ENCODE measurements at regions of chr13 and their contacts with region 1.

Region 1: DNA sequence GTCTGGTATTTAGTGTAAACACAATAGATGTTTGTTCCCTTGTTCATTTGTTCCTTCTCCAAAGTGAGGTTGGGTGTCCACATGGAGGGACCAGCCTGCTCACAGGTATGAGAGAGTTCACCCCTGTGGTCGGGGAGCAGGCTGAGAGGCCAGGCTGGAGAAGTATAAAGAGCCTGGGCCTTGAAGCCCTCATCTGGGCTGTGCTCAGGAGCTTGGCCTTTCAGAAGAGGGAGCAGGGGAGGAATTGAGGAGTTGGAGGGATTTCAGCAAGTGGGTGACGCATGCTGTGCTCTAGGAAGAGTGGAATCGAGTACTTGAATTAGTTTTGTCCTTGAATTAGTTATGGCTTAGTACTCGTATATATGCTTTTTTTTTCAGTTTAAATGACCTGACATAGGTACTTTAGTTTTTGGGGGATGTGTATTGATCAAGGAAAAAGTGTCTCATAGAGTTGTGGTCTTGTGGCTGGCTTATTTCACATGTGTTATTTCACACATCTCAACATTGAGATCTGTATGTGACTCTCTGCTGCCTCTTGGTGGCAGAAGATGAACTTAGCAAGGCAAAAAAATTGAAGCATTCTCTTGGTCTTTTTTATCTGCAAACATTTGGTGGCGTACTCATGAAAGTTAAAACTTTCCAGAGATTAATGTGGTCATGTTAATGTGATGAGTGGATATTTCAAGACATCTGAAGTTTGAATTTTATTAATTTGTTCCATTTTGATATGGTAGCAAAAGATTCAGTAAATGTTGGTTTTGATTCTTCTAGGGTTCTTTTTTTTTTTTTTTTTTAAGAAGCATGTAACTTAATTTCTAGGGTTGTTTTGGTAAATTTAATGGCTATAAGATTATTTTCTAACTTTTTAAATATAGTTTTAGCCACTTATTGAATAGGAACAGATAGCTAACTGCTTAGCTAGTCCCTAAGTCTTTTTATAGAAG is 54.3 kb downstream of the SLAIN1 start:
- DNase-seq: peak in 1 of 2 experiments; percentile 54
- H3K4me3 ChIP-seq: no peak overlapping the region
- H3K4me3 Mint-ChIP-seq: no peak overlapping the region
- H3K27ac Mint-ChIP-seq: no peak overlapping the region
- H3K4me1 ChIP-seq: no peaks in the 10 kb centered on the region
- H3K4me1 Mint-ChIP-seq: no peaks in the 10 kb centered on the region
- H3K27me3 ChIP-seq: no peaks in the 10 kb centered on the region
- H3K27me3 Mint-ChIP-seq: peaks cover 5% of the 10 kb centered on the region
- CTCF ChIP-seq: peak; percentile 80 to 84

Region 2: DNA sequence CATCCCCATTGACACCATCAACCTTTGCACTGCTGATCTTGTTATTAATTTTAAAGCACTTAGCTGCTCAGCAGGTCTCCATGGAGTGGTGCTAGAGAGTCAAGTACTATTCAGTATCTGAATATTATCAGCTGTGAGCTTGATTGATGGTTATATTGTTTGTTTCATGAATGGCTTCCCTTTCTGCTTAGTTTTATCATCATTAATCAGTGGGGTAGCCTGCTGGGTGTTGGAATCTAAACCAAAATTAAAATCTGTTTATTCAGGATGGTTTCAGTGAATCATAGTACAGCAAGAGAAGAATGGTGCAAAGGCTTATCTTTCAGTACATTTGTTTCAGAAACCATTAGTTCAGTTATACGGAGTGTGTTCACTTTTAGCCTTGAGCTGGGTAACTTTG is 258.8 kb before region 1 on chr13:
- CTCF ChIA-PET with region 1: no interaction called
- POLR2A ChIA-PET with region 1: no interaction called
- intact Hi-C with region 1: loop called (anchors 1 kb)
- DNase-seq: peak in 1 of 2 experiments; percentile 41
- H3K4me3 ChIP-seq: no peak overlapping the region
- H3K4me3 Mint-ChIP-seq: no peak overlapping the region
- H3K27ac Mint-ChIP-seq: no peak overlapping the region
- H3K4me1 ChIP-seq: no peaks in the 10 kb centered on the region
- H3K4me1 Mint-ChIP-seq: peaks cover 7% of the 10 kb centered on the region
- H3K27me3 ChIP-seq: no peaks in the 10 kb centered on the region
- H3K27me3 Mint-ChIP-seq: peaks cover 2% of the 10 kb centered on the region
- CTCF ChIP-seq: peak; percentile 35 to 59

Region 3: GRCh38 chr13:77595166-77595810 is 156.5 kb before region 1 on chr13:
- CTCF ChIA-PET with region 1: no interaction called
- POLR2A ChIA-PET with region 1: no interaction called
- intact Hi-C with region 1: loop called (anchors 1 kb)
- DNase-seq: no peak
- H3K4me3 ChIP-seq: no peak overlapping the region
- H3K4me3 Mint-ChIP-seq: no peak overlapping the region
- H3K27ac Mint-ChIP-seq: no peak overlapping the region
- H3K4me1 ChIP-seq: no peaks in the 10 kb centered on the region
- H3K4me1 Mint-ChIP-seq: no peaks in the 10 kb centered on the region
- H3K27me3 ChIP-seq: no peaks in the 10 kb centered on the region
- H3K27me3 Mint-ChIP-seq: peaks cover 2% of the 10 kb centered on the region
- CTCF ChIP-seq: no peak

Region 4: DNA sequence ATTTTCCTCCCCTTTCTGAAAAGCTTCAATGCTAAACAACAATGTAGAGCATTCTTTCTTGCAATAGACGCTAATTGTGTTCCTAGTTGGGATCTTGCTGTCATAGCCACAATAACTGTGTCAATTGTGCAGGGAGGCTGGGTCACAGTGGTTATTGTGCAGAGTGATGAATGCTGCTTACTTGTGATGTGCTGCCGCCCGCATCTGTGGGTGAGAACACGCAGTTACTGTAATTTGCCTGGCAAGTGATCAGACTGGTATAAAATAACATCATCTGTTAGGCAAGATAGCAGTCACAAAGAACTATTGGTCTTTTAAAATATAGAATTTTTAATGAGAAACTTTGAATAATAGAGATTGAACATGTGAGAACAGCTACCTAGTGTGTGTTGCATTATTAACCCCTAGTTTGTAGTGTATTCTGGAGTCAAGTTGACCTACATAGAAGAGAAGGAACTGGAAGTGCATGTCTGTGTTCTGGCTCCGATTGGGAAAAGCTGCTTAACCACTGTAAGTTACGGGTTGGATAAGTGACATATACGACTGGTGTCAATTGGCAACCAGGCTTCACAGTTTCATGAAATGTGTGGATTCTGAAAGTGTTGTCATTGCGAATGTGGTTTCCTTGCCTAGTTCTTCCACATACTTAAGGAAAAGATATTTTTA is 10.7 kb before region 1 on chr13:
- CTCF ChIA-PET with region 1: no interaction called
- POLR2A ChIA-PET with region 1: no interaction called
- intact Hi-C with region 1: no loop called
- DNase-seq: no peak
- H3K4me3 ChIP-seq: no peak overlapping the region
- H3K4me3 Mint-ChIP-seq: no peak overlapping the region
- H3K27ac Mint-ChIP-seq: no peak overlapping the region
- H3K4me1 ChIP-seq: no peaks in the 10 kb centered on the region
- H3K4me1 Mint-ChIP-seq: no peaks in the 10 kb centered on the region
- H3K27me3 ChIP-seq: no peaks in the 10 kb centered on the region
- H3K27me3 Mint-ChIP-seq: no peaks in the 10 kb centered on the region
- CTCF ChIP-seq: no peak

Region 5: GRCh38 chr13:77966671-77967070 is 214.9 kb after region 1 on chr13:
- CTCF ChIA-PET with region 1: no interaction called
- POLR2A ChIA-PET with region 1: no interaction called
- intact Hi-C with region 1: no loop called
- DNase-seq: no peak
- H3K4me3 ChIP-seq: no peak overlapping the region
- H3K4me3 Mint-ChIP-seq: no peak overlapping the region
- H3K27ac Mint-ChIP-seq: no peak overlapping the region
- H3K4me1 ChIP-seq: no peaks in the 10 kb centered on the region; the same call in 1 of the 2 replicates
- H3K4me1 Mint-ChIP-seq: peaks cover 7% of the 10 kb centered on the region
- H3K27me3 ChIP-seq: no peaks in the 10 kb centered on the region
- H3K27me3 Mint-ChIP-seq: no peaks in the 10 kb centered on the region
- CTCF ChIP-seq: no peak